ENCODE measurements at regions of chr15 and their contacts with region 1.

Region 1: GRCh38 chr15:63291507-63291906 is 14.1 kb downstream of the APH1B start:
- DNase-seq: no peak
- H3K4me3 ChIP-seq: no peak overlapping the region
- H3K27ac ChIP-seq: no peak overlapping the region
- H3K4me1 ChIP-seq: peaks cover 0 to 28% (median 4%) of the 10 kb centered on the region in 4 donors
- H3K27me3 ChIP-seq: no peaks in the 10 kb centered on the region
- CTCF ChIP-seq: no peak
- EP300 ChIP-seq: no peak
- POLR2A ChIP-seq: no peak

Region 2: GRCh38 chr15:63157118-63157843 is 134.2 kb before region 1 on chr15 and contains the start of gene RPS27L:
- intact Hi-C with region 1: no loop called
- DNase-seq: peak; percentile 92 to 97
- H3K4me3 ChIP-seq: peak within 1 kb of the TSS; percentile 78 to 84 (median 82)
- H3K27ac ChIP-seq: peak within 1 kb of the TSS; percentile 92 to 98 (median 96)
- H3K4me1 ChIP-seq: peaks cover 12 to 35% (median 22%) of the 10 kb centered on the region in 4 donors
- H3K27me3 ChIP-seq: no peaks in the 10 kb centered on the region
- CTCF ChIP-seq: no peak
- EP300 ChIP-seq: no peak
- POLR2A ChIP-seq: peak in 2 of 4 donors; percentile 36 to 72
- total RNA-seq, gene RPS27L: 8.4 to 69.8 (median 33.0) TPM

Region 3: GRCh38 chr15:63203451-63204090 is 87.9 kb before region 1 on chr15:
- intact Hi-C with region 1: no loop called
- DNase-seq: no peak
- H3K4me3 ChIP-seq: no peak overlapping the region
- H3K27ac ChIP-seq: no peak overlapping the region
- H3K4me1 ChIP-seq: peaks cover 12 to 45% (median 30%) of the 10 kb centered on the region in 4 donors
- H3K27me3 ChIP-seq: no peaks in the 10 kb centered on the region
- CTCF ChIP-seq: no peak
- EP300 ChIP-seq: no peak
- POLR2A ChIP-seq: no peak

Region 4: GRCh38 chr15:63231706-63232105 is 59.8 kb before region 1 on chr15:
- intact Hi-C with region 1: no loop called
- DNase-seq: no peak
- H3K4me3 ChIP-seq: no peak overlapping the region
- H3K27ac ChIP-seq: peak overlapping the region in 1 of 5 donors; percentile 85
- H3K4me1 ChIP-seq: peaks cover 23 to 85% (median 37%) of the 10 kb centered on the region in 4 donors
- H3K27me3 ChIP-seq: no peaks in the 10 kb centered on the region
- CTCF ChIP-seq: no peak
- EP300 ChIP-seq: no peak
- POLR2A ChIP-seq: no peak

Region 5: DNA sequence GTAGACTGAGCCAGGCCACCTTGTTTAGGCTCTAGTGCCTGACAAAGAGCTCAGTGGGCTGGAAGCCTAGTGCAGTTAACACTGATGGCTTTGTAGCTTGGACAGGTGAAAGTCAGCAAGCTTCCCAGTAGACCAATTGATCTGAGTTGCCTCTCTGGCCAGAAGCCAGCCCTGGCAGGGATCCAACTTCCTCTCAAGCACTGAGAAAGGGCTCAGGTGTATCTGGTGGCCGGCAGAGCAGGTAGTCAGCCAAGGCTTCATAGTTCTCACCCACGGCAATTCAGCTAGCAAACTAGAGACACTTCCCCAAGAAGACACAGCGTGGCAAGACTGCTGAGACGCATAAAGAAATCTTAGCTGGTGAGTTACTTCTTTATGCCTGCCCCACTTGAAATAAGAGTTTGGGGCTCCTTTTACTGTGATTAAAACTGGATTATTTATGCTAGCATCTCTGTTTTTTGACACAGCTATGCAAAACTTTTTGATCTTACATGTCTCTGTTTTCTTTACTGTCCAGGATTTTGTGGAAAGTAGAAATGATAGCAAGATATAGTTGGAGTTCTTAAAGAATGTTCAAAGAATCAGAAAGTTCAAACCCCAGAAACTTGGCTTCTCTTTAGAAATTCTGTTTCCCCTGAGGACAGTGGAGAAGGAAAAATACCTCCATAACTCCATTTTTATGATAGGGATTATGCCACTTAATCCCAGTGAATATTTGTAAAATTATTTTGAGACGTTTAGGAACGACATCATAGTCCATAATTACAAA is 98.6 kb after region 1 on chr15:
- intact Hi-C with region 1: loop called (anchors 10 kb)
- DNase-seq: peak; percentile 90 to 96
- H3K4me3 ChIP-seq: no peak overlapping the region
- H3K27ac ChIP-seq: no peak overlapping the region
- H3K4me1 ChIP-seq: peaks cover 6 to 15% (median 10%) of the 10 kb centered on the region in 4 donors
- H3K27me3 ChIP-seq: no peaks in the 10 kb centered on the region
- CTCF ChIP-seq: no peak
- EP300 ChIP-seq: no peak
- POLR2A ChIP-seq: no peak

Region 6: GRCh38 chr15:63668601-63669000 is 377.1 kb after region 1 on chr15:
- intact Hi-C with region 1: no loop called
- DNase-seq: no peak
- H3K4me3 ChIP-seq: no peak overlapping the region
- H3K27ac ChIP-seq: peak overlapping the region in 1 of 5 donors; percentile 21
- H3K4me1 ChIP-seq: peaks cover 0 to 7% (median 2%) of the 10 kb centered on the region in 4 donors
- H3K27me3 ChIP-seq: no peaks in the 10 kb centered on the region
- CTCF ChIP-seq: no peak
- EP300 ChIP-seq: no peak
- POLR2A ChIP-seq: no peak